Head of caudate nucleus (tissue), 42 donors: ENCODE measurements at regions of chr17 and their contacts with region 1.

Region 1: DNA sequence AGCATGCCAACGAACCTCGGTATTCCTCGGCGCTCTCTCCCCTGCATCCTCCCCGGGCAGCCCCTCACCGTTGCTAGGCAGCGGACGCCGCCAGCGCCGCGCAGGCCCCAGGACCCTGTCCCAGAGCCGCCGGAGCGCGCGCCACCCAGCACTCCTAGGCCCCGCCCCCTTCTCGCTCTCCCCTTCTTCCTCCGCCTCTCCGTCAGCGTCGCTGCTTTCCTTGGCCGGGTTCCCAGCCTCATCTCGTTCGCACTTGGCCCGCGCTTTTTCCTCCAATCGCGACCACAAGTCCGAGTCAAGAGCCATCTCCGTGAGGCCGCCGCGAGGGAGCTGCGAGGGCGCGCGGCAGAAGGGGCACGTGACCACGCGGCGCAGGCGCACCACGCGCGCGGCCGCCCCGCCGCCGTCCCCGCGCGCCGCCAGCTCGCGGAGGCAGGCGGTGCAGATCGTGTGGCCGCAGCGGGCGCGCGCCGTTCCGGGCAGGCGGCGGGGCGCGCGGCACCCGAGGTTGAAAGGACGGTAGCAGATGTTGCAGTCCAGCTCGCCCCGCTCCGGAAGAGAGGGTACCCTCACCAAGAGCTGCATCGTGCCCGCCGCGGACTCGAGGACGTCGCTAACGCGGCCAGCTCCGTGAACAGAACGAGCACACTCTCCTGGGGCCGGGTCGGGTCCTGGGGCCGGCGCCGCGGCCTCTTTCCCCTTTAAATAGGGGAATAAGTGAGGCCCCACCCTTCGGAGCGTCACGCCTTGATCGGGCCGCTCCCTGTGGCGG is at the start of gene RNF227:
- DNase-seq: peak; percentile 62 to 93 (median 86)

Region 2: GRCh38 chr17:7931709-7932482 is 16.1 kb after region 1 on chr17 and contains the starts of genes CNTROB and TRAPPC1:
- intact Hi-C with region 1: loop called (anchors 2 kb)
- DNase-seq: peak; percentile 98 to 100 (median 100)

Region 3: GRCh38 chr17:7956228-7956965 is 40.6 kb after region 1 on chr17:
- intact Hi-C with region 1: no loop called
- DNase-seq: peak in 10 of 42 donors; percentile 9 to 30 (median 16)

Region 4: GRCh38 chr17:7984904-7985303 is 69.1 kb after region 1 on chr17:
- intact Hi-C with region 1: loop called (anchors 1 kb)
- DNase-seq: no peak

Region 5: DNA sequence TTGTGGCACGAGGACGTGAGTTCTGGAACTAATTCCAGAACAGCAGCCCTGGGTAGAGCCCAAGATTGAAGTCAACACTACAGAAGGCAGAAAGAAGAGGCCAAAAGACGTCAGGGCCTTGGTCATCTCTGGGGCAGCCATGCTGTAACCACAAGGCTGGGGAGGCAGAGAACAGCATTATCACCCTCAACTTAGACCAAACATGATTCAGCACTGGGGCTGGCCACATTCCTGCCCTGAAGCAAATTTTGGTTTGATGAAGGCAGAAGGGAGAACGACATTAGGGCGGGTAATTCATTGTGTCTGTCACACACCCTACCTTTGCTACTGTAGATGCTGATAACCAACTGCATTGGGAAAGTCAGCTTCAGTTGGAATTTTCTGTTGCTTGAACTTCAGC is 113.3 kb after region 1 on chr17:
- intact Hi-C with region 1: no loop called
- DNase-seq: no peak